Activated CD8-positive, alpha-beta memory T cell treated with anti-CD3 and anti-CD28 coated beads, Interleukin-2, amount 10 ng/mL, durations not matched to agents 7 days and 5 days (primary cell): ENCODE measurements at regions of chr22 and their contacts with region 1.

Region 1: DNA sequence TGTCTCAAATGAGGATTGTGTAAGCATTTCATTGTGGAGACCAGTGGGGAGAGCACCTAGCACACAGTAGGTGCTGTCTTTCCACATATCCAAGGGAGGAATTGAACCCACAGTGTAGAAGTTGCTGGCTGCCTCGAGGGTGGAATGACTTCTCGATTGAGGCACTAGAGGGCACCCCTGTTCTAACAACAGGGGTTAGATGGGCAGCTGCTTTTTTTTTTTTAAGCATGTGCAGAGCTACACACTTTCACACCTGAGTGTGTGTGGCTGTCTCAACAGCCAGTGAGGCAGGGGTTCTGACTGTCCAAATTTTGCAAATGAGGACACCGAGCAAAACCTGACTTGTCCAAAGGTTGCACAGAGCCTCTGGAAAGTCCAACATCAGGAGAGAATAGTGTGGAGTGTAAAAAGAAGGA is 118.2 kb upstream of the CRYBB3 start:
- DNase-seq: peak; percentile 72
- ATAC-seq: peak; percentile 29
- H3K4me3 Mint-ChIP-seq: no peak overlapping the region
- H3K27ac Mint-ChIP-seq: peak overlapping the region; percentile 45
- H3K4me1 Mint-ChIP-seq: peaks cover 76% of the 10 kb centered on the region
- H3K27me3 Mint-ChIP-seq: no peaks in the 10 kb centered on the region

Region 2: DNA sequence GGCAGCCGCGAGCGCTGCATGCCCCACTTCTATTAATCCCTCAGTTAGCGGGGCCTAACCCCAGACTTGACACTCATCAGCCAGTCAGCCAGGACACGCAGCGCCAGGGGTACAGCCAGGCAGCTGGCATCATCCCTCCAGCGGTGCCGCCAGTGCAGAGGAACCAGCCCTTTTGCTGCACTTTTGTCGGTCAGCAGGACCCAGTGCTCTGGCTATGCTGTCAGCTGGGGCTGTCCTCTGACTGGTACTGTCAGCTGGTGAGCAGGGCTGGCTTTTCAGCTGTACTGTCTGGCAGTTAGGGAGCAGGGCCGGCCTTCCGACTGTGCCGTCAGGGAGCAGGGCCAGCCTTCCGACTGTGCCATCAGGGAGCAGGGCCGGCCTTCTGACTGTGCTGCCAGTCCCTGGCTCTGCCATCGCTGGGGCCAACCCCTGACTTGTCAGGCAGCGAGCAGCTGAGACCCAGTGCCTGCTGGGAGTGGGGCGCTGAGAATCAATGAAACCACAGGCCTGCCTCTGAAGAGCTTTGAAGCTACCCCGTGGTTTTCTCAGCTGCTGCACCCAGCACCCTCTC is 13.5 kb before region 1 on chr22:
- CTCF ChIA-PET with region 1: interaction called, 55 read pairs
- DNase-seq: peak; percentile 93
- ATAC-seq: peak; percentile 83
- H3K4me3 Mint-ChIP-seq: peak overlapping the region; percentile 81
- H3K27ac Mint-ChIP-seq: peak overlapping the region; percentile 88
- H3K4me1 Mint-ChIP-seq: peaks cover 64% of the 10 kb centered on the region
- H3K27me3 Mint-ChIP-seq: no peaks in the 10 kb centered on the region

Region 3: DNA sequence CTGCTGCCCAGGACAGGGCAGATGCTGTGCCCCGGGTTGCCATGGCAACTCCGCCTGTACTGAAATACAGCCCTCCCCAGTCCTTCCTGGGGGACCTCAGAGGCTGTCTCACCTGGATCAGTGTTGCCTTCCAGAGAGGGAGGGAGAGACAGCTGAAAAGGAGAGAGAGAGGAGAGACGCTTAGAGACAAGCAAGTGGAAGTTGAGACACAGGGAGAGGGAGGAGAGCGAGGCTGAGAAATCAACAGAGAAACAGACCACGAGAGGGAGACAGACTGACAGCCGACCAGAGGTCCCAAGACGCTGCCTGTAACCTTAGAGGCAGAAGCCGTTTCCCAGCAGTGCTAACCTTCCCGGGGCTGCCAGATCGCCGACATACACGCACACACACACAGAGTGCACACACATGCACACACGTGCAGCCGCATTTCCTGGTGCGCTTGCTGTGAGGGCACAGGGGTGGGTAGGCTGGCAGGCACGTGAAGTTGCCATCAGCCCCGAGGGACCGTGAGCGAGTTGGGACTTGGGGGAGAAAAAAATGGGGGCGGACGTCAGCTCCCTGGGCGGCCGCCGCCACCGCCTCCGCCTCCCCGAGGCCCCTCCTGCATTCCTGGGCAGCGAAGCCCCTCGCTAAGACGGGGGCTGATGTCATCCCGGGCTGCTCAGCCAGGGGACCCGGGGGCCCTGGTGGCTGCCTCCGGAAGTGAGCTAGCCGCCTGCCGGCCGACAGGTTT is 29.6 kb after region 1 on chr22:
- CTCF ChIA-PET with region 1: interaction called, 23 read pairs
- DNase-seq: peak; percentile 61
- ATAC-seq: peak; percentile 90
- H3K4me3 Mint-ChIP-seq: peak overlapping the region; percentile 65
- H3K27ac Mint-ChIP-seq: peak overlapping the region; percentile 35
- H3K4me1 Mint-ChIP-seq: peaks cover 10% of the 10 kb centered on the region
- H3K27me3 Mint-ChIP-seq: no peaks in the 10 kb centered on the region

Region 4: DNA sequence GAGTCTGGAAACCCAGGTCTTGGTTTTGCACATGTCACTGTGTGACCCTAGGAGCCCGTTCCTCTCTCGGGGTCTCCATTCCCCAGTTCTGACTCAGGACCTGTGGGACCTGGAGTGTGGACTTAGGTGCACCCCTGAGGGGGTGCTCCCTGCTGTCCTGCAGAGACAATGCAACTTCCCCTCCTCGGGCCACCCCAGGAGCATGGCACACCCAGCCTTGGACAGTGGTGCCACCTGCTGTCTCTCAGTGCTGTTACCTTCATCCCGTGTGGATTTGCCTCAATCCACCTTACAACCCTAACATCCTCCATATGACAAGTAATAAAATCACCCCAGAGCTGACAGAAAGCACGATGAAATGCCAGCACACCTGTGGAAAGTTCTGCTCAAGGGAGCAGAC is 90.7 kb after region 1 on chr22:
- CTCF ChIA-PET with region 1: interaction called, 10 read pairs
- DNase-seq: peak; percentile 53
- ATAC-seq: peak; percentile 49
- H3K4me3 Mint-ChIP-seq: no peak overlapping the region
- H3K27ac Mint-ChIP-seq: no peak overlapping the region
- H3K4me1 Mint-ChIP-seq: no peaks in the 10 kb centered on the region
- H3K27me3 Mint-ChIP-seq: no peaks in the 10 kb centered on the region

Region 5: DNA sequence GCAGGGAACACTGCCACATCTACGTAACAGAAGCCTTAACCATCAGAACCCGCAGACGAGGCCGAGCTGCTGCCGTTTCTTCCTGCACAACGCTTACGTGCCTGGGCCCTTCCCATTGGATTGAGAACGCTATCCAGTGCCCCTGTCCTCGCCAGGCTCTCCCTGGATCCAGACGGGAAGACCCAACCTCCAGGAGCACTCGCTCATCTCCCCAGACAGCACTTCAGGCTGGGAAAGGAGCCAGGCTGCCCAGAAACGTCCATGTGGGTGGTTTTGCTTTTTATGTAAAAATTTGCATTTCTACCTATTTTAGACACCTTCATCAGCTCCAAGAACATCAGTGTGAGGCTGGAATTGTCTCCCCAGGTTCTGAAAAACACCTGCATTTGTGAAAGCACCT is 111.0 kb after region 1 on chr22:
- CTCF ChIA-PET with region 1: no interaction called
- DNase-seq: no peak
- ATAC-seq: no peak
- H3K4me3 Mint-ChIP-seq: no peak overlapping the region
- H3K27ac Mint-ChIP-seq: no peak overlapping the region
- H3K4me1 Mint-ChIP-seq: no peaks in the 10 kb centered on the region
- H3K27me3 Mint-ChIP-seq: no peaks in the 10 kb centered on the region

Region 6: DNA sequence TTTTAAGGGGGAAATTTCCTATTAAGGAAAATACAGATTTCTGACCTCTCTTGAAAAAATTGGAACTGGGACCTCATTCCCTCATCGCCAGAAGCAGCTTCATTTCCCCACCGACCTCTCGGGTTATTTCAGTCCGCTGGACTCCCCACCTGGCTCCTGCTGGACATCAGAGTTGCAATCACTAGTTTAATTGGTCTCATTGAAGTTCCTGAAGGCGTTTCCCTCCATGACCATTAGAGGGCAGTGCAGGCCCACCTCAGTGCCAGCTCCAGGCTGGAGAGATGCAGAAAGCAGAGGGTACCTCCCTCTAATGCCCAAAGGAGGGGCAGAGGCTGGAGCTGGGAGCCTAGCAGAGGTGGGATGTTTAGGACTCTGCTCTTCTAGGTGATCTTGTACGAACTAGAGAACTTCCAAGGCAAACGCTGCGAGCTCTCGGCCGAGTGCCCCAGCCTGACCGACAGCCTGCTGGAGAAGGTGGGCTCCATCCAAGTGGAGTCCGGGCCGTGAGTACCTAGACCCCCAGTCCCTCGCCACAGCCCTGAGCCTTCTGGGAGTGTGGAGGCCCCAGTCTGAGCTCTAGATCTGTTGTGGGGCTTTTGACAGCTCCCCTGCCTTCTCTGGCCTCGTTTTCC is 121.0 kb after region 1 on chr22:
- CTCF ChIA-PET with region 1: interaction called, 31 read pairs
- DNase-seq: peak; percentile 70
- ATAC-seq: peak; percentile 57
- H3K4me3 Mint-ChIP-seq: no peak overlapping the region
- H3K27ac Mint-ChIP-seq: no peak overlapping the region
- H3K4me1 Mint-ChIP-seq: peaks cover 16% of the 10 kb centered on the region
- H3K27me3 Mint-ChIP-seq: no peaks in the 10 kb centered on the region